Gastrocnemius medialis (tissue), 4 donors: ENCODE measurements at regions of chr3 and their contacts with region 1.

Region 1: GRCh38 chr3:33074217-33075067 is 22.5 kb downstream of the GLB1 start:
- DNase-seq: no peak
- ATAC-seq: no peak
- H3K4me3 ChIP-seq: no peak overlapping the region
- H3K27ac ChIP-seq: no peak overlapping the region
- H3K4me1 ChIP-seq: no peaks in the 10 kb centered on the region
- H3K27me3 ChIP-seq: no peaks in the 10 kb centered on the region
- CTCF ChIP-seq: peak; percentile 34 to 70 (median 47)
- POLR2A ChIP-seq: no peak

Region 2: GRCh38 chr3:31132132-31132769 is 1942.2 kb before region 1 on chr3:
- in situ Hi-C with region 1: no loop called
- intact Hi-C with region 1: no loop called
- DNase-seq: no peak
- ATAC-seq: peak; percentile 74 to 87
- H3K4me3 ChIP-seq: no peak overlapping the region
- H3K27ac ChIP-seq: no peak overlapping the region
- H3K4me1 ChIP-seq: no peaks in the 10 kb centered on the region
- H3K27me3 ChIP-seq: no peaks in the 10 kb centered on the region
- CTCF ChIP-seq: peak; percentile 41 to 77 (median 72)
- POLR2A ChIP-seq: no peak

Region 3: GRCh38 chr3:31892916-31893573 is 1181.4 kb before region 1 on chr3:
- in situ Hi-C with region 1: no loop called
- intact Hi-C with region 1: no loop called
- DNase-seq: no peak
- ATAC-seq: no peak
- H3K4me3 ChIP-seq: no peak overlapping the region
- H3K27ac ChIP-seq: no peak overlapping the region
- H3K4me1 ChIP-seq: no peaks in the 10 kb centered on the region
- H3K27me3 ChIP-seq: no peaks in the 10 kb centered on the region
- CTCF ChIP-seq: no peak
- POLR2A ChIP-seq: no peak

Region 4: GRCh38 chr3:33137691-33138090 is 63.2 kb after region 1 on chr3:
- in situ Hi-C with region 1: no loop called
- intact Hi-C with region 1: loop called (anchors 2 kb)
- DNase-seq: no peak
- ATAC-seq: no peak
- H3K4me3 ChIP-seq: no peak overlapping the region
- H3K27ac ChIP-seq: no peak overlapping the region
- H3K4me1 ChIP-seq: no peaks in the 10 kb centered on the region
- H3K27me3 ChIP-seq: no peaks in the 10 kb centered on the region
- CTCF ChIP-seq: no peak
- POLR2A ChIP-seq: no peak